ENCODE measurements at regions of chr15 and their contacts with region 1.

Region 1: GRCh38 chr15:79596051-79596507 is 163.9 kb downstream of the MINAR1 start:
- DNase-seq: peak; percentile 92
- H3K4me3 ChIP-seq: no peak overlapping the region
- H3K27ac ChIP-seq: no peak overlapping the region
- H3K4me1 ChIP-seq: no peaks in the 10 kb centered on the region
- CTCF ChIP-seq: peak; percentile 99

Region 2: DNA sequence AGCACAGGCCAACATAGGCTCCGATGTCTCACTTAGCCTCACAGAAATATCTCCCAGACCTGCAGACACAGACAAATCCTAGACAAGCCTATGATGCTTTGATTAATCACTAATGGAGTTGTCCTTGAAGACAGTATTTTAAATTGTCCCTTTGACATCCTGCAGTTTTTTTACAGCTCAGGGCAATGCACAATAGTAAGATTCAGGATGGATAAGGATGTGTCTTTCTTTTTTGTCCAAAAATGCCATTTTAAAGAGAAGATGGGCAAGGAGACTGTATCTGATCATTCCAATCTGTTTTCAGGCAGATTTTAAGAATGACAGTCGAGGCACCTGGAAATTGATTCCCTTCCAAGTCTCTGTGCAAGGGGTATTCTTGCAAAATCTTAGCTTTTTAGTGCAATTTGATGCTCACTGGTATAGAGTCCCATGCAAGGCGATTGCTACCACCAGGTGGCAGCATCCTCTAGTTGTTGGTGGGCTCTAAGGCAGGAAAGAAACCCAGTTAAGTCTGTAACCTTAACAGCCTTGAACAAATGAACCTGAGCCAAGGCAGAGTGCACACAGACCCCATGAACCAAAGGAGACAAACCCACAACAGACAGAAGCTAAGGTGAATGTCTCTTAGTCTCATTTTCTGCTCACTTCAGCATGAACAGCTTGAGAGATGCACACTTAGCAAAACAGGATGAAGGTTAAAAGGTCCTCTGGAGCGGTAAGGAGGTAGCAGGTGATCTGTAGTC is 215.2 kb before region 1 on chr15:
- CTCF ChIA-PET with region 1: interaction called, 9 read pairs
- POLR2A ChIA-PET with region 1: no interaction called
- intact Hi-C with region 1: loop called (anchors 1 kb)
- DNase-seq: peak; percentile 74
- H3K4me3 ChIP-seq: no peak overlapping the region
- H3K27ac ChIP-seq: no peak overlapping the region
- H3K4me1 ChIP-seq: no peaks in the 10 kb centered on the region
- CTCF ChIP-seq: peak; percentile 96

Region 3: GRCh38 chr15:79427781-79428598 is 168.1 kb before region 1 on chr15:
- CTCF ChIA-PET with region 1: no interaction called
- POLR2A ChIA-PET with region 1: no interaction called
- intact Hi-C with region 1: no loop called
- DNase-seq: no peak
- H3K4me3 ChIP-seq: no peak overlapping the region
- H3K27ac ChIP-seq: no peak overlapping the region
- H3K4me1 ChIP-seq: no peaks in the 10 kb centered on the region
- CTCF ChIP-seq: no peak

Region 4: DNA sequence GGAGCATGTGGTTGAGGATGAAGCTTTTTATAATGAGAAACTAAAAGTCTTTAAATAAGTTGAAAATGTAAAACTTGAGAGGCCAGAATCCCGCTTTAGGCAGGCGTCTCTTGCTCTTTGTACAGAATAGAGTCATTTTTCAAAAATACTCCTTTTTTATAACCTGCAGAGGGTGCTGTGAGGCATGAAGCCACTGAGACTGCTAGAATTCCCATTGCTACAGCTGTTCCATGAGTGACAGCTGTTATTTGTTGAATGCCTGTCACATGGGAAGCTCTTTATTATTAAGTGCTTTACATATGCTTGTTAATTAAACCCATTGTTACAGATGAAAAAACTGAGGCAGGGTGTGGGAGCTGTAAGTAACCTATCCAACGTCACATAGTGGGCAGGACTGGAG is 145.4 kb before region 1 on chr15:
- CTCF ChIA-PET with region 1: no interaction called
- POLR2A ChIA-PET with region 1: no interaction called
- intact Hi-C with region 1: loop called (anchors 5 kb)
- DNase-seq: peak; percentile 13
- H3K4me3 ChIP-seq: no peak overlapping the region
- H3K27ac ChIP-seq: no peak overlapping the region
- H3K4me1 ChIP-seq: peaks cover 15% of the 10 kb centered on the region
- CTCF ChIP-seq: peak; percentile 69

Region 5: GRCh38 chr15:80052597-80053300 is 456.7 kb after region 1 on chr15:
- CTCF ChIA-PET with region 1: no interaction called
- POLR2A ChIA-PET with region 1: no interaction called
- intact Hi-C with region 1: no loop called
- DNase-seq: peak; percentile 67
- H3K4me3 ChIP-seq: no peak overlapping the region
- H3K27ac ChIP-seq: no peak overlapping the region
- H3K4me1 ChIP-seq: peaks cover 12% of the 10 kb centered on the region
- CTCF ChIP-seq: no peak

Measured in OCI-LY7 (cell line).